ENCODE measurements at regions of chr2 and their contacts with region 1.

Region 1: DNA sequence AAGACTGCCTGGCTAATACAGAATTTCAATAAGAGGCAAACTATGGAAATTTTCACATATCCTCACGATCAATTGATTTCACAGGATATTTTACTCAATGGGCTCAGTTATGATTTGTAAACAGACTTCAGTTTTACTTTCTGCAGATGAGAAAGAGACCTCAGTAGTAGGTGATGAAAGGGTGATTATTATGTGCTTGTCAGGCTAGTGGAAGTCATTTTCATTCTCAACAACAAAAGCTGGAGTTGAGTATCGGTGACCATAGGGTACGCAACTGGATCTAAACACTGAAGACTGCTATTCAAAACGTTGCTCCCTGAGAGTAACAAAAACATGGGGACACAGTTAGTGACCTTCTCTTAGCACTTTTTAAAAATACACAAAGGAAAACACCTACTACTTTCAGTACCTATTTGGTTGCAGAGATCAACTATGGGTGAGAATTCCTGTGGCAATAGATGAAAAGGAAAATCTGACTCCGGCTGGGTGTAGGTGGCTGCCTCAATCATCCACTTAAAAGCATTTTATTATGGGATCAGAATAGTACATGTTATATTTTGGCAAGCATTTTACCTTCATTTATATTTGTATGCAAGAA is 126.2 kb upstream of the VRK2 start:
- DNase-seq: no peak
- ATAC-seq: no peak
- H3K4me3 ChIP-seq: no peak overlapping the region
- H3K27ac ChIP-seq: no peak overlapping the region
- H3K4me1 ChIP-seq: no peaks in the 10 kb centered on the region
- H3K27me3 ChIP-seq: no peaks in the 10 kb centered on the region
- CTCF ChIP-seq: no peak
- EP300 ChIP-seq: no peak
- POLR2A ChIP-seq: no peak
- RAD21 ChIP-seq: no peak

Region 2: GRCh38 chr2:58515827-58516573 is 595.6 kb after region 1 on chr2:
- CTCF ChIA-PET with region 1: no interaction called
- POLR2A ChIA-PET with region 1: no interaction called
- in situ Hi-C with region 1: no loop called
- intact Hi-C with region 1: loop called (anchors 2 kb)
- DNase-seq: no peak
- ATAC-seq: no peak
- H3K4me3 ChIP-seq: no peak overlapping the region
- H3K27ac ChIP-seq: no peak overlapping the region
- H3K4me1 ChIP-seq: no peaks in the 10 kb centered on the region
- H3K27me3 ChIP-seq: no peaks in the 10 kb centered on the region
- CTCF ChIP-seq: no peak
- EP300 ChIP-seq: no peak
- POLR2A ChIP-seq: no peak
- RAD21 ChIP-seq: no peak